ENCODE measurements at regions of chr19 and their contacts with region 1.

Region 1: DNA sequence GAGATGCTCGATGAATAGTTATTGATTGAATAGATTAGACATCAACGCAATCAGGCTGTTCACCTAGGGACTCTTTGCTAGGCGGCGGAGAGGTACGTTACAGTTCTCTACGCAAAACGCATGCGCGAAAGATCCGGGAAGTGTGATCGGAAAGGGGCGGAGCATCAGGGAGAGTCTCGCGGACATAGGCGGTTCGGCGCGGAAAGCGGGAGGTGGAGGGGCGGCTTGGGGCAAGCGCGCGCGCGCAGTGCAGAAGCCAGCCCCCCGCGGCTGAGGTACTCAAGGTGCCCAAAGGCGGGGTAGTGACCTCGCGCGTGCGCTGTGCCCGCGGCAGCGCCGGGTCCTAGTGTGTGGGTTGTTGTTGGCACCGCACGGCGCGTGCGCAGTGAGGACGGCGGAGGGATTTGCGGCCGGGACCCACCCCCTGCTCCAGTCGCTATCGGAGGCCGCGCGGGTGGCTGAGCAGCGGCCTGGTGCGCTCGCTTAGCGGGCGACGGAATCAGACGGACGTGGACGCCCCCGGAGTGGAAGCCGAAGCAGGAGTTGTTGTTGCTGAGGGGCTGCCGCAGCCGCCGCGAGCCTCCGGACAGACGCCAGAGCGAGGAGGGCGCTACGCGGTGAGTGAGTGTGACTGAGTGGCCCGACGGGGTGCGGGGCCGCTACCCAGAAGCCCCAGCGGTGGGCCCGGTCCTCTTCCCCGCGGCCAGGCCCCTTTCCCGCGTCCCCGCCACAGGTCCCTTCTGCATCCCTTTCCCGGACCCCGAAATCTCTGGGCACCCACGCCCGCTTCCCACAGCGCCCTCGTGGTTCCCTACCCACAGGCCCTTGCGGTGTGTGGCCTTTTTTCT is at the start of gene SNRNP70:
- DNase-seq: peak; percentile 99 to 100 (median 100)
- H3K4me3 ChIP-seq: peak within 1 kb of the TSS; percentile 72 to 95
- H3K4me3 Mint-ChIP-seq: peak within 1 kb of the TSS; percentile 82 to 96 (median 94)
- H3K27ac ChIP-seq: peak within 1 kb of the TSS; percentile 81
- H3K27ac Mint-ChIP-seq: peak within 1 kb of the TSS; percentile 88 to 98 (median 93)
- H3K4me1 ChIP-seq: peaks cover 32% of the 10 kb centered on the region
- H3K4me1 Mint-ChIP-seq: peaks cover 22 to 46% (median 32%) of the 10 kb centered on the region in 4 donors
- H3K27me3 ChIP-seq: no peaks in the 10 kb centered on the region
- H3K27me3 Mint-ChIP-seq: peaks cover 0 to 3% of the 10 kb centered on the region in 2 donors
- total RNA-seq, gene SNRNP70: 675 to 689 TPM

Region 2: GRCh38 chr19:48660854-48661731 is 424.2 kb before region 1 on chr19:
- CTCF ChIA-PET with region 1: no interaction called
- POLR2A ChIA-PET with region 1: no interaction called
- intact Hi-C with region 1: no loop called
- DNase-seq: peak; percentile 82 to 88 (median 85)
- H3K4me3 ChIP-seq: peak overlapping the region in 1 of 2 donors; percentile 25
- H3K4me3 Mint-ChIP-seq: peak overlapping the region; percentile 70 to 87 (median 81)
- H3K27ac ChIP-seq: peak overlapping the region; percentile 44
- H3K27ac Mint-ChIP-seq: peak overlapping the region; percentile 79 to 99 (median 98)
- H3K4me1 ChIP-seq: peaks cover 10% of the 10 kb centered on the region
- H3K4me1 Mint-ChIP-seq: peaks cover 5 to 12% (median 8%) of the 10 kb centered on the region in 4 donors
- H3K27me3 ChIP-seq: no peaks in the 10 kb centered on the region
- H3K27me3 Mint-ChIP-seq: no peaks in the 10 kb centered on the region

Region 3: DNA sequence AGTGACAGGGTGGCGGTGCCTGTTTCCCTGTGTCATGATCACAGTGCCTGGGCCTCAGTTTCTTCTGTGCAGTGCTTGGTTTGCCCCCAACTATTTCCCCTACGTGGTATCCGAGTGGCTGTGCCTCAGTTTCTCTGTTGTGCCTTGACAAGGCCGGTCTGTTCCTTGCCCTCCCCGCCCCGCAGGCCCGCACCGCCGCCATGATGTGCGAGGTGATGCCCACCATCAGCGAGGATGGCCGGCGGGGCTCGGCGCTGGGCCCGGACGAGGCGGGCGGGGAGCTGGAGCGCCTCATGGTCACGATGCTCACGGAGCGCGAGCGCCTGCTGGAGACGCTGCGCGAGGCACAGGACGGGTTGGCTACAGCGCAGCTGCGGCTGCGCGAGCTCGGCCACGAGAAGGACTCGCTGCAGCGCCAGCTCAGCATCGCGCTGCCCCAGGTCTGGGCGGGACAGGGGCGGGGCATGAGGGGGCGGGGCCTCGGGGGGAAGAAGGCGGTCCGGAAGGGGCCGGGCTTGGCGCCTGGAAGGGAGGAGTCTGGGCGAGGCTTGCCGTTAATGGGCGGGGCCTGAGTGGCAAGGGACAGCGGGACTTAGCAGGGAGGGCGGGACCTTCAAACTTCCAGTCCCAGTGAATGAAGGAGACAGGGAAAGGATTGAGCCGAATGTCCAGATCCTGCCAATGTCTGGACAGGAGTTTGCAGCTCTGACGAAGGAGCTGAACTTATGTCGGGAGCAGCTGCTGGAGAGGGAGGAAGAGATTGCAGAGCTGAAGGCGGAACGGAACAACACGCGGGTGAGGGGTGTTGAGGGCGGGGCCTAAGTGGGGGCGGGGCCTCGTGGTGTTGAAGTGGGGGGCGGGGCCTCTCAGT is 42.7 kb after region 1 on chr19:
- CTCF ChIA-PET with region 1: no interaction called
- POLR2A ChIA-PET with region 1: no interaction called
- intact Hi-C with region 1: loop called (anchors 5 kb)
- DNase-seq: peak; percentile 93 to 96 (median 95)
- H3K4me3 ChIP-seq: peak overlapping the region in 1 of 2 donors; percentile 57
- H3K4me3 Mint-ChIP-seq: peak overlapping the region; percentile 81 to 91 (median 89)
- H3K27ac ChIP-seq: no peak overlapping the region
- H3K27ac Mint-ChIP-seq: peak overlapping the region; percentile 80 to 97 (median 93)
- H3K4me1 ChIP-seq: peaks cover 14% of the 10 kb centered on the region
- H3K4me1 Mint-ChIP-seq: peaks cover 8 to 25% (median 14%) of the 10 kb centered on the region in 4 donors
- H3K27me3 ChIP-seq: no peaks in the 10 kb centered on the region
- H3K27me3 Mint-ChIP-seq: no peaks in the 10 kb centered on the region

Measured in CD4-positive, alpha-beta memory T cell (primary cell).